ENCODE measurements at regions of chr12 and their contacts with region 1.

Region 1: DNA sequence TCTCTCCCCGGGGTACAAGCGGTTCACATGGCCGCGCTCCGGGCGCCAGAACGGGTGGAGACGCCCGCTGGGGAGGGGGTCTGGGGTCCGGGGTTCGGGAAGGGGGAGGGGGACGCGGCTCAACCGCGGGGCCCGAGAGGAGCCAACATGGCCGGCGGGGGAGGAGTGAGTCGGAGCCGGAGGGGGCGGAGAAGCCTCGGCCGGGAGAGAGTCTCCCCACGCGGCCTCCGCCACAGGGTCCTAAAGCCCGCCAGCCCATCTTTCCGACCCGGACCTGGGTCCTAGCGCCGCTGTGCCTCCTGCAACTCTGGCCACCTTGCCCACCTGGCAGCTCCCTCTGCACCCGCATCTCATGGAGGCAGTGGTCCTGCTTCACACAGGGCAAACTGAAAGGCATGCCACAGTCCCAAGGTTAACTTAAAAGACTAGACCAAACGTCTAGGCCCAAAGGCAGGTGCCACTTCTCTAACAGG is at the start of gene BAZ2A:
- DNase-seq: peak; percentile 84
- ATAC-seq: peak; percentile 65
- H3K4me3 ChIP-seq: peak within 1 kb of the TSS; percentile 98 to 100 (median 99)
- H3K4me3 Mint-ChIP-seq: peak within 1 kb of the TSS; percentile 89
- H3K27ac ChIP-seq: peak within 1 kb of the TSS; percentile 97 to 98
- H3K27ac Mint-ChIP-seq: peak within 1 kb of the TSS; percentile 92
- H3K4me1 ChIP-seq: peaks cover 63 to 73% of the 10 kb centered on the region in 2 donors
- H3K4me1 Mint-ChIP-seq: peaks cover 78% of the 10 kb centered on the region
- H3K27me3 ChIP-seq: no peaks in the 10 kb centered on the region
- H3K27me3 Mint-ChIP-seq: no peaks in the 10 kb centered on the region
- CTCF ChIP-seq: no peak
- total RNA-seq, gene BAZ2A: 280 and 284 TPM in 2 replicates

Region 2: DNA sequence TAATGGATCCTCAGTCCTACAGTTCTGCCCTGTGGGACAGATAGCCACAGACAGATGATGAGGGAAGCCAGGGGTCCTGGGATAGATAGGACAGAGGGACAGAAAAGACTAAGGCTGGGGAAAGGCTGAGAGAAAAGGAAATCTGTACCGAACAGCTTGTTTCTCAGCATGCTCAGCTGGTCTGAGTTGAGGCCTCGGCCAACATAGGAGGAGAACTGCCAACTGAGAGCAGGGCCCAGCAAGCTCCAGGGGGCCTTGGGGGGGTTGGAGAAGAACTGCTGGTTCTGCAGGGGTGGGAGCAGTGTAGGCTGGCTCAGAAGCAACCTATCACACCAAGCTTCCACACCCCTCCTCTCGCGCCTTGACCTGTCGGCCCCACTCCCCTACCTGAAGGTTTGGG is 281.4 kb before region 1 on chr12:
- CTCF ChIA-PET with region 1: no interaction called
- POLR2A ChIA-PET with region 1: interaction called, 12 read pairs
- intact Hi-C with region 1: no loop called
- DNase-seq: no peak
- ATAC-seq: no peak
- H3K4me3 ChIP-seq: no peak overlapping the region
- H3K4me3 Mint-ChIP-seq: no peak overlapping the region
- H3K27ac ChIP-seq: no peak overlapping the region
- H3K27ac Mint-ChIP-seq: no peak overlapping the region
- H3K4me1 ChIP-seq: no peaks in the 10 kb centered on the region
- H3K4me1 Mint-ChIP-seq: no peaks in the 10 kb centered on the region
- H3K27me3 ChIP-seq: no peaks in the 10 kb centered on the region
- H3K27me3 Mint-ChIP-seq: no peaks in the 10 kb centered on the region
- CTCF ChIP-seq: no peak

Region 3: GRCh38 chr12:56448860-56449621 is 181.2 kb before region 1 on chr12 and contains the start of gene TIMELESS:
- CTCF ChIA-PET with region 1: no interaction called
- POLR2A ChIA-PET with region 1: no interaction called
- intact Hi-C with region 1: no loop called
- DNase-seq: peak; percentile 95
- ATAC-seq: peak; percentile 96
- H3K4me3 ChIP-seq: peak within 1 kb of the TSS; percentile 69 to 98 (median 83)
- H3K4me3 Mint-ChIP-seq: peak within 1 kb of the TSS; percentile 90
- H3K27ac ChIP-seq: peak within 1 kb of the TSS; percentile 53 to 85
- H3K27ac Mint-ChIP-seq: peak within 1 kb of the TSS; percentile 92
- H3K4me1 ChIP-seq: peaks cover 10 to 12% of the 10 kb centered on the region in 2 donors
- H3K4me1 Mint-ChIP-seq: peaks cover 23% of the 10 kb centered on the region
- H3K27me3 ChIP-seq: no peaks in the 10 kb centered on the region
- H3K27me3 Mint-ChIP-seq: no peaks in the 10 kb centered on the region
- CTCF ChIP-seq: no peak
- total RNA-seq, gene TIMELESS: 44.4 and 46.6 TPM in 2 replicates

Region 4: DNA sequence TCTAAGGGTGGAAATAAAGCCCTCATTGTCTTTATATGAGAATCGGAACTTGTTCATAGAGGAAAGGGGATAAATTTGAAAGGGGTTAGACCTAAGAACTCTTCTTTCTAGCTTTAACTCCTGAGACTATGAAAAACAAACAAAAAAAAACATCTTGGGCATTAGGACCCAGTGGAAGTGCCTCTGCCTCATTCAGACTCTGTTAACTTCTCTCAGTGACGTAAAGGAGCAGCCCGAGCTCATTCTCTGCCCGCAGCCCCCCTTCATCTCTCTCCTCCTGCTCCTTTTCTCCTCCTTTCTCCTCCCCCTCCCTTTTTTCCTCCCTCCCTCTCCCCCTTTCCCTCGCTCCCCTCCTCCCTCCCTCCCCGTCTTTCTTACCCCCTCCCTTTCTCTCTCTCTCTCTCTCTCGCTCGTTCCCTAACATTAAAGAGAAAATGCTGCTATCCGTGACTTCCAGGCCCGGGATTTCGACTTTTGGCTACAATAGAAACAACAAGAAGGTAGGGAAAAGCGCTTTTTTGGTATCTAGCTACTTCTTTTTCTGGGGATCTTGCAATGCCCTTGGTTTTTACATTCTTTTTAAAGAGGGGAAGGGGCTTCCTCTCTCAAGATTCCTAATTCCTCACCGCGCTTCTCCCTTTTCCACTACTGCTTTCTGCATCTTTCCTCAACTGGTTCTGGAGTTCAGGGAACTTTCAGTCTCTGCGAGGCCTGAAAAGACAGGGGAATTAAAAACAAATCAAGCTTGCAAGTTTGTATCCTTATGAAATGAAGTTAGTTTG is 108.4 kb before region 1 on chr12 and contains the start of gene RBMS2:
- CTCF ChIA-PET with region 1: interaction called, 3 read pairs
- POLR2A ChIA-PET with region 1: interaction called, 6 read pairs
- intact Hi-C with region 1: loop called (anchors 5 kb)
- DNase-seq: peak; percentile 66
- ATAC-seq: peak; percentile 76
- H3K4me3 ChIP-seq: peak within 1 kb of the TSS; percentile 41 to 48 (median 41)
- H3K4me3 Mint-ChIP-seq: peak within 1 kb of the TSS; percentile 85
- H3K27ac ChIP-seq: peak within 1 kb of the TSS in 1 of 2 donors; percentile 54
- H3K27ac Mint-ChIP-seq: peak within 1 kb of the TSS; percentile 47
- H3K4me1 ChIP-seq: peaks cover 12 to 20% of the 10 kb centered on the region in 2 donors
- H3K4me1 Mint-ChIP-seq: peaks cover 22% of the 10 kb centered on the region
- H3K27me3 ChIP-seq: no peaks in the 10 kb centered on the region
- H3K27me3 Mint-ChIP-seq: peaks cover 4% of the 10 kb centered on the region
- CTCF ChIP-seq: no peak
- total RNA-seq, gene RBMS2: 5.0 and 7.6 TPM in 2 replicates

Region 5: GRCh38 chr12:56593909-56594621 is 36.1 kb before region 1 on chr12:
- CTCF ChIA-PET with region 1: interaction called, 48 read pairs
- POLR2A ChIA-PET with region 1: no interaction called
- intact Hi-C with region 1: loop called (anchors 5 kb)
- DNase-seq: peak; percentile 68
- ATAC-seq: peak; percentile 82
- H3K4me3 ChIP-seq: no peak overlapping the region
- H3K4me3 Mint-ChIP-seq: no peak overlapping the region
- H3K27ac ChIP-seq: no peak overlapping the region
- H3K27ac Mint-ChIP-seq: no peak overlapping the region
- H3K4me1 ChIP-seq: no peaks in the 10 kb centered on the region
- H3K4me1 Mint-ChIP-seq: peaks cover 3% of the 10 kb centered on the region
- H3K27me3 ChIP-seq: no peaks in the 10 kb centered on the region
- H3K27me3 Mint-ChIP-seq: no peaks in the 10 kb centered on the region
- CTCF ChIP-seq: peak; percentile 86

Region 6: DNA sequence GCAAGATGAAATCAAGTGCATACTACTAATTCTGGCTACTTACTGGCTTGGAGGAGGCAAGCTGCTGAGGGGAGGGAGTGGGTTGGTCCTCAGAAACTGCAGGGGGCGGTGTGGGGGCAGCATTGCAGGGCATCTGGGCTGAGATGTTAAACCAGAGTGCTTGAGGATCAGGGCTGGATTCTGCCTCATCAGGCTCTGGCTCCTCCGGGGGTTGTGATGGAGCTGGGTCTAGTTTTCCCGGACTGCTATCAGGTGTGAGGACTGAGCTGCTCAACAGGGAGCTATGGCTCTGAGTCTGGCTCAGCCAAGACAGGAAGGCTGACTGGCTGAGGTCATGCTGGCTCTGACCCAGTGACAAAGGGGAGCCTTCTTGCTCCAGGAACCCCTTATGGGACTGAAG is 28.7 kb before region 1 on chr12:
- CTCF ChIA-PET with region 1: interaction called, 48 read pairs
- POLR2A ChIA-PET with region 1: interaction called, 11 read pairs
- intact Hi-C with region 1: no loop called
- DNase-seq: peak; percentile 48
- ATAC-seq: peak; percentile 54
- H3K4me3 ChIP-seq: no peak overlapping the region
- H3K4me3 Mint-ChIP-seq: no peak overlapping the region
- H3K27ac ChIP-seq: no peak overlapping the region
- H3K27ac Mint-ChIP-seq: no peak overlapping the region
- H3K4me1 ChIP-seq: no peaks in the 10 kb centered on the region
- H3K4me1 Mint-ChIP-seq: no peaks in the 10 kb centered on the region
- H3K27me3 ChIP-seq: no peaks in the 10 kb centered on the region
- H3K27me3 Mint-ChIP-seq: no peaks in the 10 kb centered on the region
- CTCF ChIP-seq: no peak

Region 7: GRCh38 chr12:56645717-56646446 is 15.7 kb after region 1 on chr12 and contains the start of gene ATP5F1B:
- CTCF ChIA-PET with region 1: interaction called, 33 read pairs
- POLR2A ChIA-PET with region 1: interaction called, 33 read pairs
- intact Hi-C with region 1: no loop called
- DNase-seq: peak; percentile 97
- ATAC-seq: peak; percentile 97
- H3K4me3 ChIP-seq: peak within 1 kb of the TSS; percentile 86 to 100 (median 94)
- H3K4me3 Mint-ChIP-seq: peak within 1 kb of the TSS; percentile 79
- H3K27ac ChIP-seq: peak within 1 kb of the TSS; percentile 85 to 91
- H3K27ac Mint-ChIP-seq: peak within 1 kb of the TSS; percentile 97
- H3K4me1 ChIP-seq: peaks cover 21 to 22% of the 10 kb centered on the region in 2 donors
- H3K4me1 Mint-ChIP-seq: peaks cover 29% of the 10 kb centered on the region
- H3K27me3 ChIP-seq: no peaks in the 10 kb centered on the region
- H3K27me3 Mint-ChIP-seq: no peaks in the 10 kb centered on the region
- CTCF ChIP-seq: no peak
- total RNA-seq, gene ATP5F1B: 217 and 230 TPM in 2 replicates

Region 8: DNA sequence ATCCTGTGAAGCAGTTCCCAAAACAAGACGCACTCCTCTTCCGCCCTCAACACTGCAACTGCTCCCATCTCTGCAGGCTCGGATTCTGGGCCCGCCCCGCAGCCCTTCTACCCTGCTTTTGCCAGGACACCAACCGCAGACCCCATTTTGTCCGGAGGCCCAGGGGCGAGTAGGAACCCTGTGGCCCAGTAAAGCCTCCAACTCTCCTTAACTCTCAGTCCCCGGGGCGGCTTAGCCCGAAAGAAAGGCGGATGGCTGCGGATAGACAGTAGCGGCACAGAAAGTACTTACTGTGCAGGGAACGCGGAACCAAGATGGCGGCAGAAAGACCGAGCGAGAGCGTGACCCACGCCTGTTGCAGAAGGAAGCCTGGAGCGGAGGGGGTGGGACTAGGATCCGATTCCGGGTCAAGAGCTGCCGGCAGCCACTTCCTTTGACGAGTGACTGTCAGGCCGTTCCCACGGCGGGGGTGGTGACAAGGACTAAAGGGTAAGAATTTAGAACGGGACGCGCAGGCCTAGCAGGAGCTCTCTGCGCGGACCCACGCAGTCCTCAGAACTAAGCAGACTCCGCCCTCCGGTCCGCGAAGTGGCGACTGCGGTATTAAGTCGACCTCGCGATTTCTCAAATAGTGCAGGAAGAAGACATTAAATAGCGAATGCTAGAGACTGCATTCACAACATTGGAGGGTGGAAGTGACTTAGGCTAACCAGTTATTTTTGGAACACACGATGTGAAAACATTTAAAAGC is 95.0 kb after region 1 on chr12 and contains the start of gene NACA:
- CTCF ChIA-PET with region 1: interaction called, 5 read pairs
- POLR2A ChIA-PET with region 1: interaction called, 16 read pairs
- intact Hi-C with region 1: no loop called
- DNase-seq: peak; percentile 98
- ATAC-seq: peak; percentile 95
- H3K4me3 ChIP-seq: peak within 1 kb of the TSS; percentile 76 to 99 (median 90)
- H3K4me3 Mint-ChIP-seq: peak within 1 kb of the TSS; percentile 95
- H3K27ac ChIP-seq: peak within 1 kb of the TSS; percentile 81 to 92
- H3K27ac Mint-ChIP-seq: peak within 1 kb of the TSS; percentile 95
- H3K4me1 ChIP-seq: peaks cover 47 to 49% of the 10 kb centered on the region in 2 donors
- H3K4me1 Mint-ChIP-seq: peaks cover 59% of the 10 kb centered on the region
- H3K27me3 ChIP-seq: no peaks in the 10 kb centered on the region
- H3K27me3 Mint-ChIP-seq: no peaks in the 10 kb centered on the region
- CTCF ChIP-seq: no peak
- total RNA-seq, gene NACA: 993 and 1,076 TPM in 2 replicates

Region 9: DNA sequence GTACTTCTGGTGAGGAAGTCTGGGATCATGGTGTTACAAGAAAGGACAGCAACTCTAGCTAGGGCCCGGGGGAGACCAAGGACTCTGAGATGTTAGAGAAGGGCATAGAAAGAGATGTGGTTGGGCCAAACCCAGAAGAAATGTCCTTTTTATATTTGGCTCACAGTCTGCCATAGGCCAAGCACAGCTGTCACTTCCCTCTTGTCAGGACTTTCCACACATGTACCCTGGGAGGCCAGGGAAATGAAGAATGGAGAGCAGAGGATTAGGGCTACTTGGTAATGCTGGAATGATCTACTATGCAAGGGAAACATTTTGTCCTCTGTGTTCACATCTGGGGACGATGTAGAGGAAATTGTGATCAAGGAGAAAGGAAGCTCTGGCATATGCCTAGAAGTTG is 410.6 kb after region 1 on chr12:
- CTCF ChIA-PET with region 1: no interaction called
- POLR2A ChIA-PET with region 1: no interaction called
- intact Hi-C with region 1: no loop called
- DNase-seq: no peak
- ATAC-seq: no peak
- H3K4me3 ChIP-seq: no peak overlapping the region
- H3K4me3 Mint-ChIP-seq: no peak overlapping the region
- H3K27ac ChIP-seq: no peak overlapping the region
- H3K27ac Mint-ChIP-seq: no peak overlapping the region
- H3K4me1 ChIP-seq: peaks cover 0 to 4% of the 10 kb centered on the region in 2 donors
- H3K4me1 Mint-ChIP-seq: peaks cover 3% of the 10 kb centered on the region
- H3K27me3 ChIP-seq: no peaks in the 10 kb centered on the region
- H3K27me3 Mint-ChIP-seq: no peaks in the 10 kb centered on the region
- CTCF ChIP-seq: no peak